Transverse colon (tissue), 4 donors: ENCODE measurements at regions of chr20 and their contacts with region 1.

Region 1: DNA sequence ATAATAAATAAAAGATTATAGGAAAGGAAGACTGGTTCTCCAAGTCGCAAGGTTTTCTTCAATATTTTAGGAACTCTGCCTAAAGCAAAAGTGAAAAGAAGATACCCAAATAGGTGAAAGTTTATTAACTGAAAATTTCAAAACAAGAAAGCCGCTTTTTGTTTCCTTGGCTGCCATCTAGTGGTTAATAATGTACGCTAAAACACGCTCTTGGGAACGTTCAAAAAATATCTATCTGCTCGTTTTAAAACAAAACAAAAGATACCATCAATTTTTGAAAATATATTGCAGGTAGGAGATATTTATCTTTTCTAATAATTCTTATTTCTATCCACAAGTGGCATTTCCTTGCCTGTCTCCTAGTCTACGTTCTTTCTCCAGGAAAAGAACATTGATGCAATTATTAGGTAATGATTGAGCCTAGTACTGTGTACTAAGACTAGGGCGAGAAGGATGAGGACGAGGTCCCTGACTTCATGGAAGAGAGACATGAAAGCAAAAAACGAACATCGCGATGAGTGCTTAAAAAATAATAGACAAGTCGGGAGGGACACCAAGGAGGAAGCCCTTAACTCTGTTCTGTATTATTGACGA is 97.2 kb downstream of the SPTLC3 start:
- DNase-seq: no peak
- H3K4me3 ChIP-seq: no peak overlapping the region
- H3K27ac ChIP-seq: no peak overlapping the region
- H3K4me1 ChIP-seq: peaks cover 0 to 6% (median 0%) of the 10 kb centered on the region in 4 donors
- H3K27me3 ChIP-seq: no peaks in the 10 kb centered on the region
- CTCF ChIP-seq: peak; percentile 63 to 74 (median 66)
- EP300 ChIP-seq: no peak
- POLR2A ChIP-seq: no peak

Region 2: GRCh38 chr20:12882832-12883506 is 223.0 kb before region 1 on chr20:
- in situ Hi-C with region 1: no loop called
- intact Hi-C with region 1: no loop called
- DNase-seq: no peak
- H3K4me3 ChIP-seq: no peak overlapping the region
- H3K27ac ChIP-seq: no peak overlapping the region
- H3K4me1 ChIP-seq: no peaks in the 10 kb centered on the region
- H3K27me3 ChIP-seq: no peaks in the 10 kb centered on the region
- CTCF ChIP-seq: no peak
- EP300 ChIP-seq: no peak
- POLR2A ChIP-seq: no peak

Region 3: GRCh38 chr20:12925214-12925755 is 180.7 kb before region 1 on chr20:
- in situ Hi-C with region 1: loop called in 1 of 4 experiments (anchors 10 kb)
- intact Hi-C with region 1: no loop called
- DNase-seq: peak; percentile 44
- H3K4me3 ChIP-seq: no peak overlapping the region
- H3K27ac ChIP-seq: no peak overlapping the region
- H3K4me1 ChIP-seq: peaks cover 0 to 9% (median 0%) of the 10 kb centered on the region in 4 donors
- H3K27me3 ChIP-seq: no peaks in the 10 kb centered on the region
- CTCF ChIP-seq: peak; percentile 70 to 91 (median 73)
- EP300 ChIP-seq: no peak
- POLR2A ChIP-seq: no peak

Region 4: GRCh38 chr20:12970372-12970821 is 135.6 kb before region 1 on chr20:
- in situ Hi-C with region 1: loop called in 2 of 4 experiments (anchors 10 kb)
- intact Hi-C with region 1: no loop called
- DNase-seq: peak; percentile 9
- H3K4me3 ChIP-seq: no peak overlapping the region
- H3K27ac ChIP-seq: no peak overlapping the region
- H3K4me1 ChIP-seq: no peaks in the 10 kb centered on the region
- H3K27me3 ChIP-seq: no peaks in the 10 kb centered on the region
- CTCF ChIP-seq: peak; percentile 46 to 59 (median 51)
- EP300 ChIP-seq: no peak
- POLR2A ChIP-seq: no peak

Region 5: DNA sequence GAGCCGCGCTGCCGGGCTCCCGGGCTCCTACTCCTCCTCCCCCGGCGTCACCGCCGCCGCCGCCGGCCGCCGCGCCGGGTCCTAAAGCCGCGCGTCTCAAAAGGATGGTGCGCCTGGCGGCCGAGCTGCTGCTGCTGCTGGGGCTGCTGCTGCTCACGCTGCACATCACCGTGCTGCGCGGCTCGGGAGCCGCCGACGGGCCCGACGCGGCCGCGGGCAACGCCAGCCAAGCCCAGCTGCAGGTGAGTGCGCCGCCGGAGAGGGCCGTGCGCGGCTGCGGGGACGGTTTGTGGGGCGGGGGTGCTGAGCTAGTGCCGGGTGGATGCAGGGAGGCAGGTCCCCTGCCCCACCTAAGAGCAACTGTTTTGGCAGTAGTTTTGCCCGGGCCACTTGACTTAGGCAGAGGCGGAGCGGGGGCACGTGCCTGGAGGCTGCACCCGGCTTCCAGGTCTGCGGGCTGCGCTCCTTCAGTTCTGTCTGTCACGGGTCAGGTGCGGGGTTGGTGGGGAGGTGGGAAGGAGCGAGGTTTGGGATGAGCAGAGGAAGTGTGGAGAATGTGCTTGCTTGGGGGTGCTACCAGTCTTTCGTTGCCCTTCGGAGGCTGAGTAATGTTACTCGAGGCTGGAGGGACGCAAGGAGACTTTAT is 115.8 kb after region 1 on chr20:
- in situ Hi-C with region 1: no loop called
- intact Hi-C with region 1: no loop called
- DNase-seq: peak; percentile 46
- H3K4me3 ChIP-seq: peak overlapping the region; percentile 4 to 53 (median 37)
- H3K27ac ChIP-seq: no peak overlapping the region
- H3K4me1 ChIP-seq: peaks cover 7 to 22% (median 20%) of the 10 kb centered on the region in 4 donors
- H3K27me3 ChIP-seq: peaks cover 92% of the 10 kb centered on the region
- CTCF ChIP-seq: no peak
- EP300 ChIP-seq: no peak
- POLR2A ChIP-seq: no peak